SK-N-SH (cell line): ENCODE measurements at regions of chr3 and their contacts with region 1.

Region 1: GRCh38 chr3:71710906-71711494 is 14.2 kb downstream of the EIF4E3 start:
- DNase-seq: peak; percentile 72
- H3K4me3 ChIP-seq: no peak overlapping the region; a peak in 1 of 4 replicates
- H3K27ac ChIP-seq: no peak overlapping the region
- H3K4me1 ChIP-seq: no peaks in the 10 kb centered on the region; a peak in 1 of 4 replicates
- H3K27me3 ChIP-seq: no peaks in the 10 kb centered on the region
- CTCF ChIP-seq: peak; percentile 79
- EP300 ChIP-seq: no peak
- RAD21 ChIP-seq: peak; percentile 93

Region 2: GRCh38 chr3:71127052-71127831 is 583.8 kb before region 1 on chr3:
- CTCF ChIA-PET with region 1: no interaction called
- POLR2A ChIA-PET with region 1: no interaction called
- DNase-seq: no peak
- H3K4me3 ChIP-seq: no peak overlapping the region
- H3K27ac ChIP-seq: peak overlapping the region in 1 of 2 experiments; percentile 88; a peak in 1 of 4 replicates
- H3K4me1 ChIP-seq: peaks cover 0 to 10% of the 10 kb centered on the region in 2 experiments; a peak in 3 of 4 replicates
- H3K27me3 ChIP-seq: no peaks in the 10 kb centered on the region
- CTCF ChIP-seq: no peak
- EP300 ChIP-seq: no peak
- RAD21 ChIP-seq: no peak

Region 3: GRCh38 chr3:71528816-71529215 is 182.2 kb before region 1 on chr3:
- CTCF ChIA-PET with region 1: no interaction called
- POLR2A ChIA-PET with region 1: no interaction called
- DNase-seq: no peak
- H3K4me3 ChIP-seq: no peak overlapping the region
- H3K27ac ChIP-seq: no peak overlapping the region
- H3K4me1 ChIP-seq: peaks cover 0 to 9% of the 10 kb centered on the region in 2 experiments; a peak in 1 of 4 replicates
- H3K27me3 ChIP-seq: no peaks in the 10 kb centered on the region
- CTCF ChIP-seq: no peak
- EP300 ChIP-seq: no peak
- RAD21 ChIP-seq: no peak

Region 4: DNA sequence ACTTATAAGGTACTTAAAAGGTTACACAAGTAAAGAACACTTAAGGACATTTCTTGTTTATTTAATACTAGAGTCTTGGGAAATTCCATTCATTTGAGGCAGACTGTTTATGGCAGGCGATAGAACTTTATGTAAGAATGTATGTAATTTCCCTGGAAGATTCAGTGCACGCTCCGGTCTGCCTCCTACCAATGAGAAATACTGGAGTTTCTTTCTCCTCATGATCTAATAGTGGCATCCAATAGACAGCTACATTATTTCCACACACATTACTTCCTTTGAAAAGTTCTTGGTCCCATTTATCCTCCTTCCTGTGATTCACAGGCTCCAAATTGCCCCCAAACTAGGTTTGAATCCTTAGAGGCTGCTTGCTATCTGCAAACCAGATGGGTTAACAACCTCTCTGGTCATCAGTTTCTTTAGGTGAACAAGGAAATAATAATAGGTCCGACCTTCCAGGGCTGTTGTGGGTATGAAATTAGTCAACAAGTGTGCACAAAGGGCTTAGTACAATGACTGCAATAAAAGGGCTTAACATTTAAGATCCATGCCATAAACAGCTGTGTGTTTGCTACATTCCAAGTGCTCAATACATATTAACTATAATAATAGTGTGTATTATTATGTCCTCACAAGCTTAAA is 16.5 kb before region 1 on chr3:
- CTCF ChIA-PET with region 1: interaction called, 15 read pairs
- POLR2A ChIA-PET with region 1: no interaction called
- DNase-seq: no peak
- H3K4me3 ChIP-seq: no peak overlapping the region
- H3K27ac ChIP-seq: 0 out of 4 replicates have a peak overlapping the region, but pooled peaks of 1 of the 2 experiments have one; percentile 6
- H3K4me1 ChIP-seq: peaks cover 0 to 2% of the 10 kb centered on the region in 2 experiments; a peak in 3 of 4 replicates
- H3K27me3 ChIP-seq: no peaks in the 10 kb centered on the region
- CTCF ChIP-seq: no peak
- EP300 ChIP-seq: no peak
- RAD21 ChIP-seq: no peak

Region 5: GRCh38 chr3:71859123-71859519 is 148.1 kb after region 1 on chr3:
- CTCF ChIA-PET with region 1: interaction called, 34 read pairs
- POLR2A ChIA-PET with region 1: no interaction called
- DNase-seq: peak; percentile 55
- H3K4me3 ChIP-seq: no peak overlapping the region
- H3K27ac ChIP-seq: peak overlapping the region in 1 of 2 experiments; percentile 94; a peak in 2 of 4 replicates
- H3K4me1 ChIP-seq: peaks cover 0 to 15% of the 10 kb centered on the region in 2 experiments; a peak in 2 of 4 replicates
- H3K27me3 ChIP-seq: no peaks in the 10 kb centered on the region; the same call in 1 of the 2 replicates
- CTCF ChIP-seq: peak; percentile 38
- EP300 ChIP-seq: no peak
- RAD21 ChIP-seq: peak; percentile 86

Region 6: GRCh38 chr3:72100601-72101187 is 389.7 kb after region 1 on chr3:
- CTCF ChIA-PET with region 1: no interaction called
- POLR2A ChIA-PET with region 1: no interaction called
- DNase-seq: peak; percentile 87
- H3K4me3 ChIP-seq: peak overlapping the region; percentile 31 to 43; a peak in 3 of 4 replicates
- H3K27ac ChIP-seq: no peak overlapping the region
- H3K4me1 ChIP-seq: peaks cover 0 to 10% of the 10 kb centered on the region in 2 experiments; a peak in 1 of 4 replicates
- H3K27me3 ChIP-seq: peaks cover 5% of the 10 kb centered on the region; the same call in 1 of the 2 replicates
- CTCF ChIP-seq: no peak
- EP300 ChIP-seq: peak in 1 of 2 experiments; percentile 10; a peak in 1 of 4 replicates
- RAD21 ChIP-seq: no peak

Region 7: GRCh38 chr3:72818092-72818773 is 1107.2 kb after region 1 on chr3:
- CTCF ChIA-PET with region 1: interaction called, 12 read pairs
- POLR2A ChIA-PET with region 1: no interaction called
- DNase-seq: peak; percentile 54
- H3K4me3 ChIP-seq: no peak overlapping the region; a peak in 1 of 4 replicates
- H3K27ac ChIP-seq: peak overlapping the region in 1 of 2 experiments; percentile 61; a peak in 3 of 4 replicates
- H3K4me1 ChIP-seq: peaks cover 21 to 25% of the 10 kb centered on the region in 2 experiments
- H3K27me3 ChIP-seq: no peaks in the 10 kb centered on the region
- CTCF ChIP-seq: peak; percentile 67
- EP300 ChIP-seq: 0 out of 4 replicates have a peak, but pooled peaks of 1 of the 2 experiments have one; percentile 10
- RAD21 ChIP-seq: peak; percentile 95